Activated T-helper 1 cell treated with anti-CD3 and anti-CD28 coated beads, Interleukin-12 subunit alpha, Interleukin-12 subunit beta, Interleukin-2, Interleukin-4 antibody, amounts not matched to agents 30 ng/mL and 10 ng/mL and 1 ng/mL, durations not matched to agents 14 hours and 24 hours and 36 hours (primary cell): ENCODE measurements at regions of chr19 and their contacts with region 1.

Region 1: DNA sequence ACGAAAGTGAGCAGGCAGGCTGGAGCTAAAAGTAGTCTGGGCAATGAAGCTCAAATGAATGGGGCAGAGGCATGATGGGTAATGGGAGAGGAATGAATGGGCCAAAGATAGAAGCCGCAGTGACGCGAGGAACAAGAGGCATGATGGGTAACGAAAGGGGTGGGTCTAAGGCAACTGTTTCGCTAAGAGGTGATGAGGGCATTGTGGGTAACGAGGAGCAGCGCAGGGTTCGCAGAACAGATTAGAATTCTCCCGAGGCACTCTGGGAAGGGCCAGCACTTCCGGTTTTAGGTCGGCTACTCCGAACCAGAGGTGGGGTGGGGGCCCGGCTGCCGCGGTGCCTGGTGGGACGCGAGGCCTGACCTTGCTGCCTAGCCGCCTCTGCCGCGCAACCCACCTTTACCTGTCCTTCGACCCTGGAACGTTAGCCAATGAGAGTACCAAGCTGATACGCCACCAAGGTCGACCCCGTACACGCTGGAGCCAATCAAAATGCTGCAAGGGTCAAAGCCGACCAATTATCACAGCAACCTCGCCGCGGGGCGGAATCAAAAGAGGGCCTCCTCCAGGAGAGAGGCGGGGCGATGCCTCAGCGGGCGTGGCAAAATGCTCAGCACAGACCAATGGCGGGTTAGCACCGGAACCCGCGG is 563 bp upstream of the TOMM40 start:
- DNase-seq: peak; percentile 100
- H3K4me3 Mint-ChIP-seq: peak overlapping the region; percentile 86
- H3K27ac Mint-ChIP-seq: peak overlapping the region; percentile 96
- H3K4me1 Mint-ChIP-seq: peaks cover 30% of the 10 kb centered on the region
- H3K27me3 Mint-ChIP-seq: no peaks in the 10 kb centered on the region

Region 2: DNA sequence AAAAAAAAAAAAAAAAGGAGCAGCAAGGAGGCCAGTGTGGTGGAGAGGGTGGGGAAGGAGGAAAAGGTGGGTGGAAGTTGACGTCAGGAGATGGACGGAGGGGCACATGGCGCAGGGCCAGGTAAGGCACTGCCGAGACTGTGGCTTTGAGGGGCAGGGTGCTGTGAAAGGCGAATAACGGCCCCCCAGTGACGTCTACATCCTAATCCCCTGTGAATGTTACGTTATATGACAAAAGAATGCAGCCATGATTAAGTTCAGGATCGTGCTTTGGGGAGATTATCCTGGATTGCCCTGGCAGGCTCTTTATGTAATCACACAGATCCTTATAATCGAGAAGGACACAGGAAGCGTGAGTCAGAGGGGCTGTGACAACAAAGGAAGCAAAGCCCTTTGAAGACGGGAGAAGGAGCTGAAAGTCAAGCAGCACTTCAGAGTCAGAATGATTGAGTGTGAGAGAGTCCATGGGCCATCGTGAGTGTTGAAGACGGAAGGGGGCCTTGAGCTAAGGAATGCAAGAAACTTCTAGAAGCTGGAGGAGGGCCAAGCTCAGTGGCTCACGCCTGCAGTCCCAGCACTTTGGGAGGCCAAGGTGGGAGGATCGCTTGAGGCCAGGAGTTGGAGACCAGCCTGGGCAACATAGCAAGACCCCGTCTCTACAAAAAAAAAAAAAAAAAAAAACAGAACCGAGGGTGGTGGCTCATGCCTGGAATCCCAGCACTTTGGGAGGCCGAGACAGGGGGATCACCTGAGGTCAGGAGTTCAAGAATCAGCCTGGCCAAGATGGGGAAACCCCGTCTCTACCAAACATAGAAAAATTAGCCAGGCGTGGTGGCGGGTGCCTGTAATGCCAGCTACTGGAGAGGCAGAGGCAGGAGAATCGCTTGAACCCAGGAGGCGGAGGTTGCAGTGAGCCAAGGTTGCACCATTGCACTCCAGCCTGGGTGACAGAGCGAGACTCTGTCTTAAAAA is 205.3 kb before region 1 on chr19:
- intact Hi-C with region 1: no loop called
- DNase-seq: no peak
- H3K4me3 Mint-ChIP-seq: no peak overlapping the region
- H3K27ac Mint-ChIP-seq: peak overlapping the region; percentile 52
- H3K4me1 Mint-ChIP-seq: peaks cover 33% of the 10 kb centered on the region
- H3K27me3 Mint-ChIP-seq: peaks cover 9% of the 10 kb centered on the region

Region 3: GRCh38 chr19:44752816-44753618 is 137.5 kb before region 1 on chr19:
- intact Hi-C with region 1: loop called (anchors 1 kb)
- DNase-seq: peak; percentile 95
- H3K4me3 Mint-ChIP-seq: peak overlapping the region; percentile 88
- H3K27ac Mint-ChIP-seq: peak overlapping the region; percentile 90
- H3K4me1 Mint-ChIP-seq: peaks cover 60% of the 10 kb centered on the region
- H3K27me3 Mint-ChIP-seq: no peaks in the 10 kb centered on the region

Region 4: GRCh38 chr19:44777715-44778347 is 112.7 kb before region 1 on chr19 and contains the start of gene CBLC:
- intact Hi-C with region 1: no loop called
- DNase-seq: no peak
- H3K4me3 Mint-ChIP-seq: no peak within 1 kb of the TSS
- H3K27ac Mint-ChIP-seq: no peak within 1 kb of the TSS
- H3K4me1 Mint-ChIP-seq: no peaks in the 10 kb centered on the region
- H3K27me3 Mint-ChIP-seq: peaks cover 3% of the 10 kb centered on the region
- total RNA-seq, gene CBLC: not detected in 2 replicates

Region 5: GRCh38 chr19:44903602-44904425 is 13.3 kb after region 1 on chr19:
- intact Hi-C with region 1: loop called (anchors 1 kb)
- DNase-seq: peak; percentile 54
- H3K4me3 Mint-ChIP-seq: no peak overlapping the region
- H3K27ac Mint-ChIP-seq: no peak overlapping the region
- H3K4me1 Mint-ChIP-seq: peaks cover 8% of the 10 kb centered on the region
- H3K27me3 Mint-ChIP-seq: peaks cover 16% of the 10 kb centered on the region

Region 6: DNA sequence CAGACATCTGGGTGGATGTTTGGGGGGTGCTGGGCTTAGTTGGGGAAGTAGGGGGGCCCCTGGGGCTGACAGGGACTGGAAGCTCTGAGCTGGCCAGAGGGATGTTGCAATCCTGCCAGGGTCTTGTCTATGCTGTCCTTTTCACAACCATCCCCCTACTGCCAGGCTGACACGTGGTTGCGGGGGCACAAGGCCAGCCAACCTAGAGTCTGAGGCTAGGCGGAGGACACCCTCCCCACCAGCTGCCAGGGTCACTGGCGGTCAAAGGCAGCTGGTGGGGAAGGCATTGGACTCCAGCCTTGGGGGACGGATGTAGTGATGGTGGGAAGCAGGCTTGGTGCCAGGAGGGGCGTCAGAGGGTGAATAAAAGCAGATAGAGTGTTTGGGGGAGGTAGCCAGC is 22.4 kb after region 1 on chr19:
- intact Hi-C with region 1: loop called (anchors 1 kb)
- DNase-seq: no peak
- H3K4me3 Mint-ChIP-seq: peak overlapping the region; percentile 68
- H3K27ac Mint-ChIP-seq: peak overlapping the region; percentile 34
- H3K4me1 Mint-ChIP-seq: peaks cover 24% of the 10 kb centered on the region
- H3K27me3 Mint-ChIP-seq: peaks cover 23% of the 10 kb centered on the region

Region 7: GRCh38 chr19:45001087-45001739 is 110.7 kb after region 1 on chr19 and contains the start of gene RELB:
- intact Hi-C with region 1: loop called (anchors 1 kb)
- DNase-seq: peak; percentile 96
- H3K4me3 Mint-ChIP-seq: peak within 1 kb of the TSS; percentile 91
- H3K27ac Mint-ChIP-seq: peak within 1 kb of the TSS; percentile 97
- H3K4me1 Mint-ChIP-seq: peaks cover 11% of the 10 kb centered on the region
- H3K27me3 Mint-ChIP-seq: no peaks in the 10 kb centered on the region
- total RNA-seq, gene RELB: 73.3 and 77.5 TPM in 2 replicates